Aorta (tissue), 5 donors: ENCODE measurements at regions of chr13 and their contacts with region 1.

Region 1: GRCh38 chr13:110306960-110307746 is at the starts of genes COL4A1 and COL4A2:
- DNase-seq: peak; percentile 80 to 94
- ATAC-seq: peak; percentile 85
- H3K4me3 ChIP-seq: peak within 1 kb of the TSS; percentile 55 to 89
- H3K27ac ChIP-seq: peak within 1 kb of the TSS; percentile 80 to 91
- H3K4me1 ChIP-seq: peaks cover 6 to 11% of the 10 kb centered on the region in 2 donors
- H3K27me3 ChIP-seq: no peaks in the 10 kb centered on the region
- total RNA-seq, gene COL4A1: 564 to 910 TPM
- total RNA-seq, gene COL4A2: 693 to 1,110 TPM

Region 2: DNA sequence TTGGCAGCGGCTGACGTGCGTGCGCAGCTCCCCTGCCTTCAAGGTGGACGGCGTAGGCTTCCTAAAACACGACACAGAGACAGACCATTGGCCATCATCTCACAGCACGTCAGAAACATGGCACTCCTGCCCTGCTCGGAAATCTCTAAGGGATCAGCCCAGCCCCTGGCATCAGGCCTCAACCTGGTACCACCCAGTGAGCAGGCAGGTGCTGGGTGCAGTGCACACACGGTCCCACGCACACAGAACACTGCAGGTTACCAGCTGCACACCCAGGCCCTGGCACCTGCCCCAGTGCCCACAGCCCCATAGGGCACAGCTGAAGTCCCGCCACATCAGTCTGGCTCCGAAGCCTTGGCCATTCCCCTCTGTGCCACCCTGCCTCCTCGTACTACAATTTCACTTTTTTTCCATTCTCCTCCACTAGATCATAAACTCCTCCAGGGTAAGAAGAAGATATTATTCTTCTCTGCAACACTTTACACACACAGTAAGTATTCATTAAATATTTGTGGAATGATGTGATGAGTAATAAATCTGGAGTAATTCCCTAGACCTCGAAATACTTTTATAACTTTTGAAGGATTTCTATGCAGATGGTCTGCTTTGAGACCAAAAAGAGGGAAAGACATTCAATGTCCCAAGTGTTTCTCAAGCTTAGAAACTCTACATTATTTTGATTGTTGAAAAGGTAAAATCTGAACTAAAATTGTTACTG is 156.6 kb before region 1 on chr13:
- intact Hi-C with region 1: no loop called
- DNase-seq: no peak
- ATAC-seq: peak; percentile 30
- H3K4me3 ChIP-seq: no peak overlapping the region
- H3K27ac ChIP-seq: no peak overlapping the region
- H3K4me1 ChIP-seq: no peaks in the 10 kb centered on the region
- H3K27me3 ChIP-seq: no peaks in the 10 kb centered on the region

Region 3: DNA sequence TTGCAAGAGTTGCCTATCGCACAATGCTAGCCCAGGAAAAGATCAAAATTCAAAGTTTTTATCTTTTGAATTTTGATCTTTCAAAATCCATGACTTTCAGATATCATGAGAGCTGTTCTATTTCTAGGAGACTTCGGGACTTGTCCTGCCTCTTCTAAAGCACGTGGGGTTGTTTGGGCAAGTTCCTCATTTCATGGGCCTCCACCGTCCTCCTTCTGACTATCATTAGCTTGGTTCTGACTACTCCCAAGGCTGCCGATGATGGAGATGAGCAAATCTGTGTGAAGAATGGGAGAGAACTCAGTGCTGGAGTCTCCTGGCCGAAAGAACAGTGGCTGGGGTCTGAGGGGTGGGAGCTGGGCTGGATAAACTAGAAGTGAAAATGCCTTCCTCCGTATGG is 86.7 kb before region 1 on chr13:
- intact Hi-C with region 1: loop called (anchors 5 kb)
- DNase-seq: no peak
- ATAC-seq: no peak
- H3K4me3 ChIP-seq: no peak overlapping the region
- H3K27ac ChIP-seq: peak overlapping the region in 1 of 2 donors; percentile 61
- H3K4me1 ChIP-seq: peaks cover 4 to 7% of the 10 kb centered on the region in 2 donors
- H3K27me3 ChIP-seq: no peaks in the 10 kb centered on the region

Region 4: GRCh38 chr13:110244071-110244830 is 62.9 kb before region 1 on chr13:
- intact Hi-C with region 1: loop called in 1 of 2 experiments (anchors 5 kb)
- DNase-seq: no peak
- ATAC-seq: peak; percentile 34
- H3K4me3 ChIP-seq: no peak overlapping the region
- H3K27ac ChIP-seq: peak overlapping the region; percentile 38 to 98
- H3K4me1 ChIP-seq: peaks cover 3 to 14% of the 10 kb centered on the region in 2 donors
- H3K27me3 ChIP-seq: no peaks in the 10 kb centered on the region

Region 5: DNA sequence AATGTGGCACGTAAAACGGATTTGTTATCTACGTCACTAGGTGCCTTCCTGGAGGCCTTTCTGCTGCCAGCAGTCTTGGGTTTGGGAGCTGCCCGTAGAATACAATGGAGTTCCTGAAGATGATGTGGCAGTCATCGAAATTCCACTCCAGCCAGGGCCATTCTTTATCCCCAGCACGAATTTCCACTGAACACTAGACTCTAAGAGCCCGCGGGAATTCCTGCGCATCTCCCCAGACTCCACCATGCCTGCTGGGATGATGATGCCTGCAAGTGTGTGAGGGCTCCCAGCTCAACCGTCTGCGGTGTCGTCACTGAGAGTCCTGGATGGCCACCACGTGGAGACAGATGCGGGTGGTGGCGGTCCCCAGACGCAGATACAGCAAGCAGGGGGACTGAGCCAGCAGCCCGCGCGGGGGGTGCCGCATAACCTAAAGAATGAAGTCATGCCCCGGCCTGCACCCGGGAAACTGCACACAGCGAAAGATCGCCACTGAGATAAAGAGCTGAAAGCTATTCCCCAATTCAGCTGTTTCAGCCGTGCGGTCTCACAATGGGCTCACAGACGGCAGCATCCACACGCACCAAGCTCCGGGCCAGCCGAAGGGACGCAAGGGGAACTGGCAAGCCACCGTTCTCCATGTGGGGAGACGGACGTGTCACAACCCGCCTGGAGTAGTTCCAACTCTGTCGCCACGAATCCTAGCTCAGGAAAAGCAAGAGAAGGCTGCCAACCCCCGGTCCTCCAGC is 41.3 kb before region 1 on chr13:
- intact Hi-C with region 1: loop called in 1 of 2 experiments (anchors 5 kb)
- DNase-seq: peak; percentile 91
- ATAC-seq: peak; percentile 57
- H3K4me3 ChIP-seq: no peak overlapping the region
- H3K27ac ChIP-seq: peak overlapping the region; percentile 2 to 70
- H3K4me1 ChIP-seq: peaks cover 4 to 7% of the 10 kb centered on the region in 2 donors
- H3K27me3 ChIP-seq: no peaks in the 10 kb centered on the region

Region 6: GRCh38 chr13:110340812-110341444 is 33.8 kb after region 1 on chr13:
- intact Hi-C with region 1: loop called (anchors 5 kb)
- DNase-seq: peak; percentile 94 to 97
- ATAC-seq: peak; percentile 80
- H3K4me3 ChIP-seq: no peak overlapping the region
- H3K27ac ChIP-seq: peak overlapping the region; percentile 96 to 99
- H3K4me1 ChIP-seq: peaks cover 10 to 13% of the 10 kb centered on the region in 2 donors
- H3K27me3 ChIP-seq: no peaks in the 10 kb centered on the region

Region 7: GRCh38 chr13:110352735-110353134 is 45.6 kb after region 1 on chr13:
- intact Hi-C with region 1: no loop called
- DNase-seq: no peak
- ATAC-seq: no peak
- H3K4me3 ChIP-seq: no peak overlapping the region
- H3K27ac ChIP-seq: peak overlapping the region in 1 of 2 donors; percentile 47
- H3K4me1 ChIP-seq: peaks cover 1 to 3% of the 10 kb centered on the region in 2 donors
- H3K27me3 ChIP-seq: no peaks in the 10 kb centered on the region